GM13976 (cell line): ENCODE measurements at regions of chr11 and their contacts with region 1.

Region 1: DNA sequence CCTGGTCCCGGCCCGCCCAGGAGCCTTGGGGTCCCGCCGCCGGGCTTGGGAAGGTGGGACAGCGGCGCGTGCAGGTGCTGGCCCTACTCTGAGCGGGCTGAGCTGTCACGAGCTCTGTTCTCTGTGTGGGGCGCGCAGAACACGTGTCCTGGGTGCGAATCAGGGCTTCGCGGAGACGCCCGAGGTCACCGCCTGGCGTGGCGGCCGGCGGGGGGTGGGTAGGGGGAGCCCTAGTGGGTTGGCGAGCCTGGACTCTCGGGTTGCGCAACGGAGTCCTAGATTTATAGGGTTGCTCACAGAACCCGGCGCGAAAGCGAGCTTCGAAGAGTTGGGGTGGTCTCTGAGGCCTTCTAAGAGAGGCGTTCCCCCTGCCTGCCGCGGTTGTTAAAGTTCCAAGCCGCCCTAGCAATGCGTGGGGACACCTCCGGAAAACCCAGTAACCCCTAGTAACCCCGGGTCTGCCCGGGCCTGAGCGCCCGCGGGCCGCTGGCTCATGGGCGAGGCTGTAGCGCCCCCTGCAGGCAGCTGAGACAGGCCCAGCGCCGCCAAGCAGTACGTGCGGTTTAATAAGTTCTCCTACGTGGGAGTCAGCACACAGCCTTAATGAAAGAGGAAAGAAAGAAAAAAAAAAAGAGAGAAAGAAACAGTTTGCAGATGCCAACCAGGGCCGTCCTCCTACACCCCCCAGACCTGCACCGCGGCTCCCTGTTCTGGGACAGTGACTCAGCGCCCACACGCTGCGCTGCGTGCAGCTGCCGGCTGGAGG is 2.8 kb downstream of the ADM start:
- DNase-seq: peak; percentile 85
- CTCF ChIP-seq: peak; percentile 98

Region 2: GRCh38 chr11:9534791-9535781 is 772.5 kb before region 1 on chr11:
- in situ Hi-C with region 1: no loop called
- DNase-seq: peak; percentile 76
- CTCF ChIP-seq: peak; percentile 79

Region 3: GRCh38 chr11:9861860-9862725 is 445.5 kb before region 1 on chr11:
- in situ Hi-C with region 1: loop called (anchors 25 kb)
- DNase-seq: peak; percentile 64
- CTCF ChIP-seq: peak; percentile 64

Region 4: DNA sequence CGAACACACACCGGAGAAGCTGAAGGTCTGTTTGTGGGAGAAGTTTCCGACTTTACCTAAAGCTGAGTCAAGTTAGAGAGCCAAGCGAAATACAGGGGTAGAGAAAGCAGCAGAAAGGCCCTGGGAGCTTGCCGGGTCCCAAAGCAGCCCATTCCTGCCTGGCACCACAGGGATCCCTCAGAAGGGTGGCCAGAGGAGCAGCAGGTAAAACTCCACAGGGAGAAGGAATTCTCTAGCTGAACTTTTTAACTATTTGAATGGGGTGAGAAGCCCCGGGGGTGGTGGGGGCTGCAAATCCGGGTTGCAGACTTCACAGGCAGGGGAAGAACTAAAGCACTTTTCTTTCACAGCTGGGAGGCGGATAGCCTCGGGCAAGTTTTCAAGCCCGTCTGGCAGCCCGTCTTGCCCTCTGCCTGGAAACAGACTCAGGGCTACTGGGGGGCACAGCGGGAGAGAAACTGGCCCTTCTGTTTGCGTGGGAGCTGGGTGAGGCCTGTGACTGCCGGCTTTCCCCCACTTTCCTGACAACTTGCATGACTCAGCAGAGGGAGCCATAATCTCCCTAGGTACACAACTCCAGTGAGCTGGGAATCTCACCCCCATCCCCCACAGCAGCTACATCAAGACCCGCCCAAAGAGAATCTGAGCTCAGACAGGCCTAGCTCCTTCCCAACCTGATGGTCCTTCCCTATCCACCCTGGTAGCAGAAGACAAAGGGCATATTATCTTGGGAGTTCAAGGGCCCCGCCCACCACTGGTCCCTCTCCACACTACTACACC is 324.6 kb before region 1 on chr11:
- in situ Hi-C with region 1: loop called (anchors 25 kb)
- DNase-seq: no peak
- CTCF ChIP-seq: no peak